BJ (cell line): ENCODE measurements at regions of chr1 and their contacts with region 1.

Region 1: GRCh38 chr1:109610609-109611307 is 8.7 kb downstream of the GNAT2 start:
- DNase-seq: no peak
- H3K4me3 ChIP-seq: no peak overlapping the region
- H3K27me3 ChIP-seq: no peaks in the 10 kb centered on the region
- CTCF ChIP-seq: no peak

Region 2: DNA sequence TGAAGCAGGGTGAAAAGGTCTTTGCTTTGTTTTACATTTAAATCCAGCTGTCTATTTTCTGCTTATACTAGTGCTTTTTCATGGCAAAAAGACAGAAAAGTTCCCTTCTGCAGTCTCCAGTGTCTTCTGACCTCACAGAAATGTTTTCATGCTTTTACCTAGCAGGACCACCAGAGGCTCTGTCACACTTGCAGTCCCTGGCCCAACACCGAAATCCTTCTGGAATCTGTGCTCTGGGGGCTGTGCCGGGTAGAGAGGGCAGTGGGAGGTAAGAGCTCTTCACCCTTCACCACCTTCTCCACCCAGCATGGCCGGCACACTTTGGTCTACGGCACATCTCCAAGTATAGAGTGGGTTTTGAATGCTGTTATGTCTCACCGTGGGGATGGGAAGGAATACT is 12.1 kb before region 1 on chr1:
- CTCF ChIA-PET with region 1: interaction called, 27 read pairs
- POLR2A ChIA-PET with region 1: interaction called, 4 read pairs
- DNase-seq: no peak
- H3K4me3 ChIP-seq: no peak overlapping the region
- H3K27me3 ChIP-seq: no peaks in the 10 kb centered on the region
- CTCF ChIP-seq: no peak

Region 3: GRCh38 chr1:109762821-109763645 is 152.3 kb after region 1 on chr1:
- CTCF ChIA-PET with region 1: no interaction called
- POLR2A ChIA-PET with region 1: no interaction called
- DNase-seq: no peak
- H3K4me3 ChIP-seq: no peak overlapping the region
- H3K27me3 ChIP-seq: no peaks in the 10 kb centered on the region
- CTCF ChIP-seq: no peak

Region 4: DNA sequence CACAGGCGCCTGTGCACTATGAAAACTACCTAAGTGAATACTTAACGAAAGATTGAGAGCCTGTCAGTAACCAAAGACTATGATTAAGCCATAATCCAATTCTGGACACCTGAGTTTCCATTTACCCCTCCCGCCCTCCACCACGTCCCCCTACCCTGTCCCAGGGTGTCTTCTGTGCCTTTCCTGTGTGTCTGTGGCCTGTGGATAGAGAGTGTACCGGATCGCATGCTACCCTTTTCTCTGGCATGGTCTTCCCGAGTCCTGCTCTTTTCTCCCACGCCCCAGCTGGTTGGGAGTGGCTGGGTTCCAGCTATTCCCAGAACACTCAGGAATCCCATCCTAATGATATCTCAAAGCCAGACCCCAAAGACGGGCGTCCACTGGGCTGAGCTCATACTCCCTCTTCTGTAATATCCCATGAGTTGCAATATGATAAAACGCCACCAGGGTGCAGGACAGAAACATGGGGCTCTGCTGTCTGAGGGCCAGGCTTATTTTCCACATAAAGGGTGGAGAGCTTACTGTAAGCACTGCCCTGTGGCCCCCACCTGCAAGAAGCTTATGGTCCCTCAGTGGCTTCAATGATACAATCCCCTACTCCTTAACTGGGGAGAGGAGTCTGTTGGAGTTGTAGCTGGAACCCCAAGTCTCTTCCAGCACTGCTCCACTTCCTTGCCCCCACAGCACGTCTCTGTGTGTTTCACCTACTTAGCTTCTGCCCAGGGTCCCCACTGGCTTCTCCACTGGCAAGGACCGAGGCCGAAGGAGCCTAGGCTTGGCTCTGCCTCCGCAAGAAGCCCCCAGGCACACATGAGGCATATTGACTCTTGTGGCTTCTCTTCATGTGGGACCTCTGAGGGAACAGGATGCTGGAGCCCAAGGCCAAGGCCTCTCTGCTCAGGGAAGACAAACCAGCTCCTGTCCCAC is 477.3 kb after region 1 on chr1:
- CTCF ChIA-PET with region 1: no interaction called
- POLR2A ChIA-PET with region 1: no interaction called
- DNase-seq: no peak
- H3K4me3 ChIP-seq: no peak overlapping the region
- H3K27me3 ChIP-seq: peaks cover 2% of the 10 kb centered on the region
- CTCF ChIP-seq: peak; percentile 76